BJ (cell line): ENCODE measurements at regions of chr4 and their contacts with region 1.

Region 1: GRCh38 chr4:110516106-110516922 is 40.4 kb downstream of the ENPEP start:
- DNase-seq: no peak
- H3K4me3 ChIP-seq: no peak overlapping the region
- H3K27me3 ChIP-seq: no peaks in the 10 kb centered on the region; the same call in 1 of the 2 replicates
- CTCF ChIP-seq: peak; percentile 87

Region 2: GRCh38 chr4:109998867-109999584 is 517.3 kb before region 1 on chr4:
- CTCF ChIA-PET with region 1: interaction called, 189 read pairs
- POLR2A ChIA-PET with region 1: no interaction called
- DNase-seq: no peak
- H3K4me3 ChIP-seq: no peak overlapping the region
- H3K27me3 ChIP-seq: no peaks in the 10 kb centered on the region
- CTCF ChIP-seq: peak; percentile 56

Region 3: GRCh38 chr4:110005461-110006056 is 510.8 kb before region 1 on chr4:
- CTCF ChIA-PET with region 1: interaction called, 189 read pairs
- POLR2A ChIA-PET with region 1: no interaction called
- DNase-seq: no peak
- H3K4me3 ChIP-seq: no peak overlapping the region
- H3K27me3 ChIP-seq: no peaks in the 10 kb centered on the region
- CTCF ChIP-seq: peak; percentile 69

Region 4: GRCh38 chr4:110310795-110311194 is 205.5 kb before region 1 on chr4:
- CTCF ChIA-PET with region 1: interaction called, 170 read pairs
- POLR2A ChIA-PET with region 1: no interaction called
- DNase-seq: no peak
- H3K4me3 ChIP-seq: no peak overlapping the region
- H3K27me3 ChIP-seq: no peaks in the 10 kb centered on the region
- CTCF ChIP-seq: no peak

Region 5: GRCh38 chr4:110344162-110344561 is 172.2 kb before region 1 on chr4:
- CTCF ChIA-PET with region 1: interaction called, 25 read pairs
- POLR2A ChIA-PET with region 1: no interaction called
- DNase-seq: no peak
- H3K4me3 ChIP-seq: no peak overlapping the region
- H3K27me3 ChIP-seq: no peaks in the 10 kb centered on the region
- CTCF ChIP-seq: 0 out of 2 replicates have a peak, but pooled peaks have one; percentile 22

Region 6: GRCh38 chr4:110449947-110450346 is 66.4 kb before region 1 on chr4:
- CTCF ChIA-PET with region 1: no interaction called
- POLR2A ChIA-PET with region 1: no interaction called
- DNase-seq: no peak
- H3K4me3 ChIP-seq: no peak overlapping the region
- H3K27me3 ChIP-seq: no peaks in the 10 kb centered on the region
- CTCF ChIP-seq: no peak

Region 7: GRCh38 chr4:110526589-110526988 is 10.3 kb after region 1 on chr4:
- CTCF ChIA-PET with region 1: interaction called, 13 read pairs
- POLR2A ChIA-PET with region 1: no interaction called
- DNase-seq: no peak
- H3K4me3 ChIP-seq: no peak overlapping the region
- H3K27me3 ChIP-seq: no peaks in the 10 kb centered on the region
- CTCF ChIP-seq: no peak